Calu3 (cell line): ENCODE measurements at regions of chr10 and their contacts with region 1.

Region 1: GRCh38 chr10:62437696-62438095 is 63.5 kb downstream of the ZNF365 start:
- DNase-seq: peak; percentile 59
- H3K4me3 Mint-ChIP-seq: no peak overlapping the region
- H3K27ac Mint-ChIP-seq: no peak overlapping the region
- H3K4me1 Mint-ChIP-seq: peaks cover 32% of the 10 kb centered on the region
- H3K27me3 Mint-ChIP-seq: no peaks in the 10 kb centered on the region
- CTCF ChIP-seq: peak; percentile 70

Region 2: GRCh38 chr10:61621605-61622060 is 816.1 kb before region 1 on chr10:
- CTCF ChIA-PET with region 1: no interaction called
- intact Hi-C with region 1: no loop called
- DNase-seq: no peak
- H3K4me3 Mint-ChIP-seq: no peak overlapping the region
- H3K27ac Mint-ChIP-seq: no peak overlapping the region
- H3K4me1 Mint-ChIP-seq: peaks cover 9% of the 10 kb centered on the region
- H3K27me3 Mint-ChIP-seq: no peaks in the 10 kb centered on the region
- CTCF ChIP-seq: no peak

Region 3: GRCh38 chr10:62297857-62298256 is 139.8 kb before region 1 on chr10:
- CTCF ChIA-PET with region 1: no interaction called
- intact Hi-C with region 1: no loop called
- DNase-seq: no peak
- H3K4me3 Mint-ChIP-seq: no peak overlapping the region
- H3K27ac Mint-ChIP-seq: no peak overlapping the region
- H3K4me1 Mint-ChIP-seq: no peaks in the 10 kb centered on the region
- H3K27me3 Mint-ChIP-seq: no peaks in the 10 kb centered on the region
- CTCF ChIP-seq: no peak

Region 4: GRCh38 chr10:62492012-62492869 is 54.5 kb after region 1 on chr10:
- CTCF ChIA-PET with region 1: interaction called, 3 read pairs
- intact Hi-C with region 1: loop called (anchors 2 kb)
- DNase-seq: peak; percentile 33
- H3K4me3 Mint-ChIP-seq: no peak overlapping the region
- H3K27ac Mint-ChIP-seq: no peak overlapping the region
- H3K4me1 Mint-ChIP-seq: no peaks in the 10 kb centered on the region
- H3K27me3 Mint-ChIP-seq: no peaks in the 10 kb centered on the region
- CTCF ChIP-seq: peak; percentile 57

Region 5: DNA sequence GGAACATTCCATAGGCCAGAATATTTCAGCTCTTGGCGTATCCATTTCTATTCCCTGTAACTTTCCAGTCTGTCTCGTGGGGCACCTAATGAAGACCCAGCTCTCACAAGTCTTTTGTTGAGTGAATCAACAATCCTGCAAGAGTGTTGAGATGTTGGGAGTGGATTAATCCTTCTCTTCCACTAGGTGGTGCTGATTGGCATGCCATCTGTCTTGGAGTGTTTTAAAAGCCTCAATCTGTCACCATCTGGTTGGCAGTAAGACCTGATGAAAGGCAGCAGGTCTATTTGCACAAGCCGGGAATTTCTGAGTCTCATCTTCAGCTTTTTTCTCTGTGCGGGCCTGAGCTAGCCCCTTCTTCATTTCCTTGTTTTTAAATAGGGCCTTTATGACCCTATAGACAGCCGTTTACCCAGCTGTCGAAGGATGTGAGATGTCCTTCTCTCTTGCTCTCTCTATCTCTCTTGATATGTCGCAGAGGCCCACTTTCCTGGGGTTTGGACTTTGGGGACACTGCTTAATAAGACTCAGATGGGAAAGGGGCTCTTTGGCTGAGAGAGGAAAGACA is 117.0 kb after region 1 on chr10:
- CTCF ChIA-PET with region 1: no interaction called
- intact Hi-C with region 1: loop called (anchors 5 kb)
- DNase-seq: peak; percentile 22
- H3K4me3 Mint-ChIP-seq: no peak overlapping the region
- H3K27ac Mint-ChIP-seq: no peak overlapping the region
- H3K4me1 Mint-ChIP-seq: no peaks in the 10 kb centered on the region
- H3K27me3 Mint-ChIP-seq: peaks cover 20% of the 10 kb centered on the region
- CTCF ChIP-seq: peak; percentile 51

Region 6: GRCh38 chr10:62594093-62594520 is 156.4 kb after region 1 on chr10:
- CTCF ChIA-PET with region 1: no interaction called
- intact Hi-C with region 1: loop called (anchors 5 kb)
- DNase-seq: peak; percentile 77
- H3K4me3 Mint-ChIP-seq: no peak overlapping the region
- H3K27ac Mint-ChIP-seq: no peak overlapping the region
- H3K4me1 Mint-ChIP-seq: no peaks in the 10 kb centered on the region
- H3K27me3 Mint-ChIP-seq: no peaks in the 10 kb centered on the region
- CTCF ChIP-seq: peak; percentile 94

Region 7: DNA sequence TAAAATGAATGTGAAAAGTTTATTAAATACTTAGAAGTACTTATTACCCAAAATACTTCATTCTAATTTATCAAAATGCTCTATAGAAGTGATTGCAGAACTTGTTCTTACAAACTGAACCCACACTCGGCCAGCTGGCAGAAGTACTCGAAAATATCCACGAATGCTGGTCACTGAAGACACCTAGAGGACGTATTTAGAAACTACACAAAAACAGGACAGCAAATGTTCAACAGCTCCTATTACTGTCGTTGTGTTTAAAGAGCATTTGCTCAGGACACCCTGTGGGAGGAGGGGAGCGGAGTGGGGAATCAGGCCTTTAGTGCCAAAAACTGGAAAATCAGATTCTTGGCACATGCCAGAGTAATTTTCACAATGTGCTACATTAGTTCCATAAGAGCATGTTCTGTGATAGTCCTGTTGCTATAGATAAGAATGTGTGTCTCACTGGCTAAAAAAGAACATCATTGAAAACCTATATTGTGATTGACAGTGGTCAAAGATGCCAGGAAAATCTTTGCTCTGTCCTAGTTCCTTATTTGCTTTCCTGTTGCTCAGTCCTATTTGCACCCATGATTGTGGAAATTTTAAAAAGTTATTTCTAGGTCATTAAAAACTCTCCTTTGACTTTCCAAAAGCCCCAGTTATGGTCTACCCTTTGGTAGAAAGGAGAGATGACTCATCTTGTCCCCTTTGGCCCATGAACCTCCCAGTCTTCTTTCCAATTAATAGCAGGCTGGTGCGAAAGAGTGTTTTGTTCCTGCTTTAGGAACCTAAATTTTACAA is 646.4 kb after region 1 on chr10:
- CTCF ChIA-PET with region 1: no interaction called
- intact Hi-C with region 1: loop called (anchors 5 kb)
- DNase-seq: peak; percentile 36
- H3K4me3 Mint-ChIP-seq: no peak overlapping the region
- H3K27ac Mint-ChIP-seq: no peak overlapping the region
- H3K4me1 Mint-ChIP-seq: no peaks in the 10 kb centered on the region
- H3K27me3 Mint-ChIP-seq: peaks cover 19% of the 10 kb centered on the region
- CTCF ChIP-seq: peak; percentile 68

Region 8: GRCh38 chr10:63157845-63158624 is 720.3 kb after region 1 on chr10:
- CTCF ChIA-PET with region 1: no interaction called
- intact Hi-C with region 1: loop called (anchors 1 kb)
- DNase-seq: peak; percentile 59
- H3K4me3 Mint-ChIP-seq: no peak overlapping the region
- H3K27ac Mint-ChIP-seq: no peak overlapping the region
- H3K4me1 Mint-ChIP-seq: no peaks in the 10 kb centered on the region
- H3K27me3 Mint-ChIP-seq: no peaks in the 10 kb centered on the region
- CTCF ChIP-seq: peak; percentile 82